ENCODE measurements at regions of chr2 and their contacts with region 1.

Region 1: DNA sequence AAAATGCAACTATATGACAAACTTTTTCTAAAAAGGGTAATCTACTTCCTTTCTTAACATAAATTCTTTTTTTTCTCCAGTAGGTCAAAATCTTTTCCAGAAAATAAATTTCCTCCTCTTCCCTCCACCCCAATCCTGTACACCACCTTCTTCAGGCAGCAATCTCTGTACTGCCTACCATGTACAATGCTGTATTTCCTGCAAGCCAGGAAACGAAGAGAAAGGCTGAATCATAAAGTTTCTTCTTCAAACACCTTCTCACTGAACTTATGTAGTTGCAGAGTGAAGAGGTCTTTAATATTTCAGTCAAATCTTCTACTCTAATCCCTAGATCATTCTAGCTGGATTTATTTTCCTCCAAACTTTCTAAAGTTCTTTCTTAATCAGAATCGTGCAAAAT is 18.2 kb upstream of the C2orf66 start:
- DNase-seq: no peak
- H3K4me3 ChIP-seq: no peak overlapping the region
- H3K27ac ChIP-seq: no peak overlapping the region
- H3K4me1 ChIP-seq: no peaks in the 10 kb centered on the region
- H3K27me3 ChIP-seq: no peaks in the 10 kb centered on the region
- CTCF ChIP-seq: no peak

Region 2: GRCh38 chr2:195320416-195320973 is 1506.9 kb before region 1 on chr2:
- intact Hi-C with region 1: loop called (anchors 5 kb)
- DNase-seq: no peak
- H3K4me3 ChIP-seq: no peak overlapping the region
- H3K27ac ChIP-seq: no peak overlapping the region
- H3K4me1 ChIP-seq: no peaks in the 10 kb centered on the region
- H3K27me3 ChIP-seq: no peaks in the 10 kb centered on the region
- CTCF ChIP-seq: no peak

Measured in tibial artery (tissue), 4 donors.